ENCODE measurements at regions of chr1 and their contacts with region 1.

Region 1: GRCh38 chr1:8987881-8988617 is 38.2 kb downstream of the SLC2A7 start:
- DNase-seq: no peak
- H3K4me3 ChIP-seq: no peak overlapping the region
- CTCF ChIP-seq: peak; percentile 86

Region 2: GRCh38 chr1:8858888-8859706 is 129.0 kb before region 1 on chr1:
- CTCF ChIA-PET with region 1: interaction called, 47 read pairs
- POLR2A ChIA-PET with region 1: no interaction called
- DNase-seq: no peak
- H3K4me3 ChIP-seq: no peak overlapping the region
- CTCF ChIP-seq: peak; percentile 60

Region 3: GRCh38 chr1:8910914-8911313 is 77.1 kb before region 1 on chr1:
- CTCF ChIA-PET with region 1: interaction called, 206 read pairs
- POLR2A ChIA-PET with region 1: no interaction called
- DNase-seq: no peak
- H3K4me3 ChIP-seq: no peak overlapping the region
- CTCF ChIP-seq: no peak

Region 4: DNA sequence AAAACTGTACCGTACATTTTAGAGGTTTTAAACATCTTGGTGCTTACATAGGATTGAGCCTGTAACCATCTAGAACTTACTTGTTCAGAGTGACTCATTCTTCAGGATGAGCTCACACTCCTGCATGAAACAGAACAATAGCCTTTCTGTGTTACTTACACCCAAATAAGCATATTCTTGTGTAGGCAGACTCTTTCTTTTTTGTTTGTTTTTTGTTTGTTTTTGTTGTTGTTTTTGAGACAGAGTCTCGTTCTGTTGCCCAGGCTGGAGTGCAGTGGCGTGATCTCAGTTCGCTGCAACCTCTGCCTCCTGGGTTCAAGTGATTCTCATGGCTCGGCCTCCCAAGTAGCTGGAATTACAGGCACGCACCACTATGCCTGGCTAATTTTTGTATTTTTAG is 46.1 kb before region 1 on chr1:
- CTCF ChIA-PET with region 1: interaction called, 14 read pairs
- POLR2A ChIA-PET with region 1: no interaction called
- DNase-seq: peak; percentile 37
- H3K4me3 ChIP-seq: no peak overlapping the region
- CTCF ChIP-seq: no peak

Region 5: GRCh38 chr1:8962812-8963530 is 25.1 kb before region 1 on chr1:
- CTCF ChIA-PET with region 1: interaction called, 20 read pairs
- POLR2A ChIA-PET with region 1: interaction called, 3 read pairs
- DNase-seq: no peak
- H3K4me3 ChIP-seq: no peak overlapping the region
- CTCF ChIP-seq: peak; percentile 37

Region 6: GRCh38 chr1:8976896-8977450 is 11.1 kb before region 1 on chr1:
- CTCF ChIA-PET with region 1: interaction called, 13 read pairs
- POLR2A ChIA-PET with region 1: no interaction called
- DNase-seq: no peak
- H3K4me3 ChIP-seq: no peak overlapping the region
- CTCF ChIP-seq: no peak

Measured in AG04449 (cell line).